Naive thymus-derived CD8-positive, alpha-beta T cell (primary cell): ENCODE measurements at regions of chr1 and their contacts with region 1.

Region 1: GRCh38 chr1:21344750-21345443 is 54.6 kb upstream of the ECE1 start:
- DNase-seq: peak in 1 of 10 donors; percentile 36
- ATAC-seq: peak; percentile 30 to 56
- H3K4me3 Mint-ChIP-seq: peak overlapping the region in 9 of 10 donors; percentile 82 to 92 (median 88)
- H3K27ac Mint-ChIP-seq: peak overlapping the region; percentile 44 to 85 (median 75)
- H3K4me1 Mint-ChIP-seq: peaks cover 36 to 48% (median 44%) of the 10 kb centered on the region in 4 donors
- H3K27me3 Mint-ChIP-seq: no peaks in the 10 kb centered on the region

Region 2: GRCh38 chr1:21270086-21270689 is 74.7 kb before region 1 on chr1:
- POLR2A ChIA-PET with region 1: interaction called, 11 read pairs
- DNase-seq: peak; percentile 65 to 90 (median 78)
- ATAC-seq: peak; percentile 84 to 98
- H3K4me3 Mint-ChIP-seq: no peak overlapping the region
- H3K27ac Mint-ChIP-seq: peak overlapping the region in 7 of 10 donors; percentile 20 to 67 (median 33)
- H3K4me1 Mint-ChIP-seq: peaks cover 9 to 29% (median 15%) of the 10 kb centered on the region in 4 donors
- H3K27me3 Mint-ChIP-seq: no peaks in the 10 kb centered on the region

Region 3: GRCh38 chr1:21280011-21280471 is 64.9 kb before region 1 on chr1:
- POLR2A ChIA-PET with region 1: interaction called, 12 read pairs
- DNase-seq: peak in 3 of 10 donors; percentile 14 to 19 (median 15)
- ATAC-seq: peak; percentile 57 to 73
- H3K4me3 Mint-ChIP-seq: peak overlapping the region; percentile 46 to 87 (median 76)
- H3K27ac Mint-ChIP-seq: peak overlapping the region; percentile 89 to 97 (median 95)
- H3K4me1 Mint-ChIP-seq: peaks cover 19 to 56% (median 46%) of the 10 kb centered on the region in 4 donors
- H3K27me3 Mint-ChIP-seq: no peaks in the 10 kb centered on the region

Region 4: DNA sequence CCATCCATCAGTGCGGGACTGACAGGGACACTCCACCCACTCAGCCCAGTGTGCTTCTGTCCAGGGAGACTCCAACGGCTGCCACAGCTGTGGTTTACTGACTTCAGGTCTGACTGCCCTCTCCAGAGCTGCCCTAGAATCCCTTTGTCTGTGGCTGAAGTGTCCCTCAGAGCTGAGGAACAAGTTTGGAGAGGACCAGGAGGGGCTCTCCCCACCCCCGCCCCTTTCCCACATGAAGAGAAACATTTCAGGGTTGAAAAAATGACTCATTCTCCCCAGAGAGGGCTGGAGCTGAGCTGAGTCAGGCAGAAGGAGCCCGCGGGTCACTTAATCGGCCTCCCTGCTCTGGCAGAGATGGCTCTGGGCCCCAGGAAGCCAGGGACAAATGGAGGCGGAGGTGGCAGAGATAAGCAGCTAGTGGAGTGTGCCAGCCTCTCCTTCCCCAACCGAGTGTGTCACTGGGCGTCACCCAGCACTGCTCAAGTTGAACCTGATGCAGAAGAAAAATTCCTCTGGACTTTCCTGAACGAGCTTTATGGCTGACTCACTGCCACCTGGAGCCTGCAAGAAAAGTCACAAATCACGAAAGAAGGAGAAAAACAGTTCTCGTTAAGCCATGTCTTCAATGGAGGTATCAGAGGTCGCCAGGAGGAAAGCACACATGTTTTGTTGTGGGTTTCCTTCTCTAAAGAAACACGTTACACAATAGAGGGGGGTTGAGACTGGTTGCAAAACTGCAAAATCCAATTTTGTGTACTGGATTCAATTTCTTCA is 20.3 kb before region 1 on chr1:
- POLR2A ChIA-PET with region 1: interaction called, 32 read pairs
- DNase-seq: peak in 7 of 10 donors; percentile 28 to 72 (median 41)
- ATAC-seq: peak; percentile 74 to 80
- H3K4me3 Mint-ChIP-seq: peak overlapping the region; percentile 69 to 89 (median 82)
- H3K27ac Mint-ChIP-seq: peak overlapping the region; percentile 85 to 97 (median 96)
- H3K4me1 Mint-ChIP-seq: peaks cover 47 to 92% (median 85%) of the 10 kb centered on the region in 4 donors
- H3K27me3 Mint-ChIP-seq: no peaks in the 10 kb centered on the region

Region 5: GRCh38 chr1:21334214-21335087 is 10.4 kb before region 1 on chr1:
- POLR2A ChIA-PET with region 1: interaction called, 47 read pairs
- DNase-seq: peak; percentile 44 to 91 (median 80)
- ATAC-seq: peak; percentile 87 to 89
- H3K4me3 Mint-ChIP-seq: peak overlapping the region; percentile 78 to 93 (median 91)
- H3K27ac Mint-ChIP-seq: peak overlapping the region; percentile 94 to 99 (median 97)
- H3K4me1 Mint-ChIP-seq: peaks cover 36 to 91% (median 87%) of the 10 kb centered on the region in 4 donors
- H3K27me3 Mint-ChIP-seq: no peaks in the 10 kb centered on the region